ENCODE measurements at regions of chr1 and their contacts with region 1.

Region 1: GRCh38 chr1:44652445-44653106 is 21.7 kb downstream of the TMEM53 start:
- DNase-seq: peak; percentile 57 to 85 (median 78)
- ATAC-seq: peak; percentile 99
- H3K4me3 ChIP-seq: no peak overlapping the region
- H3K4me3 Mint-ChIP-seq: no peak overlapping the region
- H3K27ac ChIP-seq: no peak overlapping the region
- H3K27ac Mint-ChIP-seq: peak overlapping the region; percentile 57
- H3K4me1 ChIP-seq: no peaks in the 10 kb centered on the region
- H3K4me1 Mint-ChIP-seq: no peaks in the 10 kb centered on the region
- H3K27me3 ChIP-seq: no peaks in the 10 kb centered on the region
- H3K27me3 Mint-ChIP-seq: no peaks in the 10 kb centered on the region
- CTCF ChIP-seq: peak; percentile 85

Region 2: GRCh38 chr1:44012941-44013609 is 639.5 kb before region 1 on chr1:
- CTCF ChIA-PET with region 1: no interaction called
- POLR2A ChIA-PET with region 1: no interaction called
- intact Hi-C with region 1: loop called in 1 of 2 experiments (anchors 5 kb)
- DNase-seq: no peak
- ATAC-seq: peak; percentile 42
- H3K4me3 ChIP-seq: no peak overlapping the region
- H3K4me3 Mint-ChIP-seq: no peak overlapping the region
- H3K27ac ChIP-seq: no peak overlapping the region
- H3K27ac Mint-ChIP-seq: no peak overlapping the region
- H3K4me1 ChIP-seq: peaks cover 17% of the 10 kb centered on the region
- H3K4me1 Mint-ChIP-seq: peaks cover 18% of the 10 kb centered on the region
- H3K27me3 ChIP-seq: no peaks in the 10 kb centered on the region
- H3K27me3 Mint-ChIP-seq: no peaks in the 10 kb centered on the region
- CTCF ChIP-seq: no peak

Region 3: DNA sequence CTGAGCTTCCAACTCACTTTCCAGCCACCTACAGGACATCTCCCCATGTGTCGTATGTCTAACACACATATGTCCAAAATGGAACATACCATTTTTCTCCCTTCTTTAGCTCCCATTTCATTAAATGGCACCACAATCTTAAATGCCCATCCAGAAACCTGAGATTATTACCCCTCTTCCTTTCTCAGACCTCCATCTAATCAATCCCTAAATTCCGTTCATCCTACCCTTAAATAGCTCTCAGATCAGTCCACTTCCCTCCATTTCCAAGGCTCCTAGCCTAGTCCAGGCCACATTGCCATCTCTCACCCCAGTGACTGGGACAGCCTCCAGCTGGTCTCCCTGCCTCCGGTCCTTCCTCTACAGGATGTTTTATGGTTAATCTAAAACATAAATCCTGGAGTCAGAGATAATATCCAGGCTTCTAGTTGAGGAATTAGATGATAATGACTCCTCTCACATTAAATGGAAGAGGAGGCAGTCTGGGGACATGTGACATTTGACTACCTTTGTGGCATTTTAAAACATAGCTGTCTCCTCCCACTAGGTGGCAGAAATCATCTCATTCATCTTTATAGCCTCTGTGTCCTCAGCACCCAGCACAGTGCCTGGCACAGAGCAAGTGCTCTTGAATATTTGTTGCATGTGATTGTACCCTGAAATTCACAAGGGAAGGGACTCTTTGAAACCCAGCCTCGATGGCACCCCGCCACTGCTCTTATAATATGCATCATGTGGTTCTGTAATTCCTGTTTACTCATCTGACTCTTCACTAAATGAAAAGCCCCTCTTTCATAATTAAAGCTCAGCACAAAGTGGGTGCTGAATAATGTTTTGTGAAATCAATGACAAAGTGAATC is 80.6 kb before region 1 on chr1:
- CTCF ChIA-PET with region 1: interaction called, 154 read pairs
- POLR2A ChIA-PET with region 1: interaction called, 7 read pairs
- intact Hi-C with region 1: loop called (anchors 1 kb)
- DNase-seq: peak in 3 of 9 experiments; percentile 9 to 58 (median 44)
- ATAC-seq: peak; percentile 40
- H3K4me3 ChIP-seq: no peak overlapping the region
- H3K4me3 Mint-ChIP-seq: no peak overlapping the region
- H3K27ac ChIP-seq: no peak overlapping the region
- H3K27ac Mint-ChIP-seq: no peak overlapping the region
- H3K4me1 ChIP-seq: no peaks in the 10 kb centered on the region
- H3K4me1 Mint-ChIP-seq: no peaks in the 10 kb centered on the region
- H3K27me3 ChIP-seq: no peaks in the 10 kb centered on the region
- H3K27me3 Mint-ChIP-seq: peaks cover 5% of the 10 kb centered on the region
- CTCF ChIP-seq: peak; percentile 62

Region 4: DNA sequence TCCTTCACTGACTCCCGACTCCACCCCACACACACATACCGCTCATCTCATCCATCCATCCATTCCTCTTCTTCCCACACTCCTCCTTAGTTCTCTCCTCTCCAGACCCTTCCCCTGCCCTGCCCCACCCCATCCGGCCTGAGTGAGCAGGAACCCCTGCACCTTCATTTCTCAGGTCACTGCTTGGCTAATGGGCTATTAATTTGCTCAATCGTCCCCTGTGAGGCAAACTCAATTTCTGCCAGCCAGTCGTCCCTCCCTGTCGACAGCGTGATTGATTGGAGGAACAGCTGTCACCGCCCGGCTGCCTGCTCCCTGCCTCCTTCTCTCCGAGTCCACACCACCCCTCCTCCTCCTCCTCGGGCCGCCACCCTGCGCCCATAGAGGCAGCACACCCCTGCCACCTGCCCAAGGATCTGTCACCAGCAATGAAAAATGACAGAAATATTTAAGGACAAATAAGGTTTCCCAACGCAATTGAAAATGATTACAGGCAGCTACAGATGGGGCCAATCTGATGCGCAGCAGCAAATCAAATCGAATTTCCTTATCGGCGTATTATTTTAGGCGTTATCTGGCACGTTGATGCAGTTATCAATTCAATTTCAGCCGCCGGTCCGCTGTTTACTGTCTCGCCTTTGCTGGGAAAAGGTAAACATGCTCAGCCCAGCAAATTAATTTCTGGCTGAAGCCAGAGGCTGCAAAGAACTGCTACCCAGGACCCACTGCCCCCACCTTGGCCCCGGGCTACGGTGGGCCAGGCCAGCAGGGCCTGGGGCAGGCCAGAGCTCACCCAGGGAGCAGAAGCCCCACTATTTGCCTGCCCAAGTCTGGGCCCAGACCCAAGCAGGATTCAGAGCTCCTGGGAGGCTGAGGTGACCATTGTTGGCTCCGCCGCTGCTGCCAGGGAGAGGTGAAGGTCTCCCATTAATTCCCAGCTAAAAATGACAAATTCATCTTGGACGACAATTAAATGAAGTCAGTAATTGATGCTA is 49.6 kb before region 1 on chr1:
- CTCF ChIA-PET with region 1: interaction called, 78 read pairs
- POLR2A ChIA-PET with region 1: interaction called, 3 read pairs
- intact Hi-C with region 1: no loop called
- DNase-seq: no peak
- ATAC-seq: no peak
- H3K4me3 ChIP-seq: no peak overlapping the region
- H3K4me3 Mint-ChIP-seq: no peak overlapping the region
- H3K27ac ChIP-seq: no peak overlapping the region
- H3K27ac Mint-ChIP-seq: no peak overlapping the region
- H3K4me1 ChIP-seq: no peaks in the 10 kb centered on the region
- H3K4me1 Mint-ChIP-seq: no peaks in the 10 kb centered on the region
- H3K27me3 ChIP-seq: no peaks in the 10 kb centered on the region
- H3K27me3 Mint-ChIP-seq: peaks cover 2% of the 10 kb centered on the region
- CTCF ChIP-seq: no peak

Region 5: GRCh38 chr1:44616284-44616990 is 36.1 kb before region 1 on chr1:
- CTCF ChIA-PET with region 1: interaction called, 78 read pairs
- POLR2A ChIA-PET with region 1: no interaction called
- intact Hi-C with region 1: no loop called
- DNase-seq: no peak
- ATAC-seq: no peak
- H3K4me3 ChIP-seq: no peak overlapping the region
- H3K4me3 Mint-ChIP-seq: no peak overlapping the region
- H3K27ac ChIP-seq: no peak overlapping the region
- H3K27ac Mint-ChIP-seq: no peak overlapping the region
- H3K4me1 ChIP-seq: no peaks in the 10 kb centered on the region
- H3K4me1 Mint-ChIP-seq: no peaks in the 10 kb centered on the region
- H3K27me3 ChIP-seq: no peaks in the 10 kb centered on the region
- H3K27me3 Mint-ChIP-seq: no peaks in the 10 kb centered on the region
- CTCF ChIP-seq: no peak

Region 6: DNA sequence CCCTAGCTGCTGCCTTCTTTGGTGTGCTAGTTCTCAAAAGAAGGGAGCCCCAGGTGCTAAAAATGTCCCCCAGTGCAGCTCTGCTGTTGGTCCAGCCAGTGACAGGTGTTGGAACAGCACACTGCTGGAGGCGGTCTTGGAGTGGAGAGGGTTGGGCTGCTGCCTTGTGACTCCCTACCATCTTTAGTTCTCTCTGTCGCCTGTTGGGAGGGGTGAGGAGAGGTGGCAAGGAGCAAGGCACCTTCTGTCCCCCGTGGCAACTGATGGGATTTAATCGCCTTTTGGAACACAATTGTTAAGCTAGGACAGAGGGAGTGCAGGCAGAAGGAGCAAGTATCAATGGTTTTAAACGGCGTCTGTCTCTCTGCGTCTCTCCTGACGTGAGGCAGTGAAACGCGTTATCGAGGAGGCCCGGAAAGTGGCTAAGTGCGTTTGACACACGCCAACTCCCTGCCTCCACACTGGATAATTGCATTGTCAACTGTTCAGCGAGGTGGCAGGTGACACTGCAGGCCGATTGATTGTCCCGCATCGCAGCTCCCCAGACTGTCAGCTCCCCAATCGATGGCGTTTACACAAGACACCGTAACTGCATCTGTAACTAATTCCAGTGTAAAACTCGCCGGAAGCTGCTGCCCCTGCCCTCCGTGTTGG is 12.2 kb before region 1 on chr1:
- CTCF ChIA-PET with region 1: interaction called, 54 read pairs
- POLR2A ChIA-PET with region 1: no interaction called
- intact Hi-C with region 1: no loop called
- DNase-seq: no peak
- ATAC-seq: no peak
- H3K4me3 ChIP-seq: no peak overlapping the region
- H3K4me3 Mint-ChIP-seq: no peak overlapping the region
- H3K27ac ChIP-seq: no peak overlapping the region
- H3K27ac Mint-ChIP-seq: no peak overlapping the region
- H3K4me1 ChIP-seq: no peaks in the 10 kb centered on the region
- H3K4me1 Mint-ChIP-seq: peaks cover 16% of the 10 kb centered on the region
- H3K27me3 ChIP-seq: no peaks in the 10 kb centered on the region
- H3K27me3 Mint-ChIP-seq: no peaks in the 10 kb centered on the region
- CTCF ChIP-seq: no peak

Region 7: GRCh38 chr1:44674113-44675000 is 21.8 kb after region 1 on chr1 and contains the starts of genes ARMH1 and TMEM53:
- CTCF ChIA-PET with region 1: interaction called, 43 read pairs
- POLR2A ChIA-PET with region 1: no interaction called
- intact Hi-C with region 1: no loop called
- DNase-seq: peak; percentile 91 to 98 (median 96)
- ATAC-seq: peak; percentile 91
- H3K4me3 ChIP-seq: peak within 1 kb of the TSS; percentile 76 to 88
- H3K4me3 Mint-ChIP-seq: peak within 1 kb of the TSS; percentile 94
- H3K27ac ChIP-seq: peak within 1 kb of the TSS; percentile 81 to 82
- H3K27ac Mint-ChIP-seq: peak within 1 kb of the TSS; percentile 91
- H3K4me1 ChIP-seq: peaks cover 12% of the 10 kb centered on the region
- H3K4me1 Mint-ChIP-seq: peaks cover 25% of the 10 kb centered on the region
- H3K27me3 ChIP-seq: no peaks in the 10 kb centered on the region
- H3K27me3 Mint-ChIP-seq: no peaks in the 10 kb centered on the region
- CTCF ChIP-seq: no peak
- total RNA-seq, gene ARMH1: 117 to 128 TPM
- total RNA-seq, gene TMEM53: 1.2 TPM in 1 of 2 experiments, not detected in the other

Region 8: GRCh38 chr1:45097944-45098343 is 445.4 kb after region 1 on chr1:
- CTCF ChIA-PET with region 1: no interaction called
- POLR2A ChIA-PET with region 1: no interaction called
- intact Hi-C with region 1: no loop called
- DNase-seq: no peak
- ATAC-seq: no peak
- H3K4me3 ChIP-seq: no peak overlapping the region
- H3K4me3 Mint-ChIP-seq: no peak overlapping the region
- H3K27ac ChIP-seq: no peak overlapping the region
- H3K27ac Mint-ChIP-seq: no peak overlapping the region
- H3K4me1 ChIP-seq: no peaks in the 10 kb centered on the region
- H3K4me1 Mint-ChIP-seq: no peaks in the 10 kb centered on the region
- H3K27me3 ChIP-seq: no peaks in the 10 kb centered on the region
- H3K27me3 Mint-ChIP-seq: peaks cover 2% of the 10 kb centered on the region
- CTCF ChIP-seq: no peak

Region 9: DNA sequence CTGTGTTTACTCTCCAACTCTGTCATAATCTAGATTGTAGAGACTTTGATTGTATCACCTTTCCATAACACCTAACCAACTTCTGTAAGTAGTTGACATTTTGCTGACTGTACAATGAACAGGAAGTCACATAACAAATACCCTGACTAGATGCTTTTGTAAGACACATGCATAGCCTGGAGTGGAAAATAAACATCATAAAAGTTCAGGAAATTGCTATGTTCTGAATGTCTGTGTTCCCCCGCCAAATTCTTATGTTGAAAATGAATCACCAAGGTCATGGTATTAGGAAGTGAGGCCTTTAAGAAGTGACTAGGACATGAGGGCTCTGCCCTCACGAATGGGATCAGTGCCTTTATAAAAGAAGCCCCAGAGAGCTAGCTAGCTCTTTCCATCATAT is 594.2 kb after region 1 on chr1:
- CTCF ChIA-PET with region 1: no interaction called
- POLR2A ChIA-PET with region 1: no interaction called
- intact Hi-C with region 1: no loop called
- DNase-seq: no peak
- ATAC-seq: no peak
- H3K4me3 ChIP-seq: no peak overlapping the region
- H3K4me3 Mint-ChIP-seq: no peak overlapping the region
- H3K27ac ChIP-seq: no peak overlapping the region
- H3K27ac Mint-ChIP-seq: peak overlapping the region; percentile 25
- H3K4me1 ChIP-seq: no peaks in the 10 kb centered on the region
- H3K4me1 Mint-ChIP-seq: peaks cover 6% of the 10 kb centered on the region
- H3K27me3 ChIP-seq: no peaks in the 10 kb centered on the region
- H3K27me3 Mint-ChIP-seq: peaks cover 4% of the 10 kb centered on the region
- CTCF ChIP-seq: no peak